B cell (primary cell): ENCODE measurements at regions of chr5 and their contacts with region 1.

Region 1: DNA sequence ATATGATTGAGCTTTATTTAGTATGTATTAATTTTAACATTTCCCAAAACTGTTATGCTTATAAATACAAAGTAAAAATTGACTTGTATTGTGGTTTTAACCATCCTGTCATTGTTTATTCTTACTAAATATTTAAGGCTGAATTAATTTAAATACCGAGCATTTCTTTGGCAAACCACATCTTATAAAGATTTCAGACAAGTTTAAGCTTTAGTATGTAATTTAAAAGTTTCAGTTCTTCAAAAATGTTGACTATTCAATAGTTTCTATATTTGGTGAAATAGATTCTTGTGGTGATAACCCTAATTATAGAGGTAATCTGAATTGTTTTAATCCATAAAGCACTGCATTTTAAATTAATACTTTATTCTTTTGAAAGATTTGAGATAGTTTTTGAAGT is 65.5 kb downstream of the CCNH start:
- DNase-seq: no peak
- ATAC-seq: no peak
- H3K4me3 ChIP-seq: no peak overlapping the region
- H3K4me3 Mint-ChIP-seq: no peak overlapping the region
- H3K27ac ChIP-seq: no peak overlapping the region
- H3K27ac Mint-ChIP-seq: no peak overlapping the region
- H3K4me1 ChIP-seq: peaks cover 0 to 9% of the 10 kb centered on the region in 2 donors
- H3K4me1 Mint-ChIP-seq: peaks cover 17% of the 10 kb centered on the region
- H3K27me3 ChIP-seq: no peaks in the 10 kb centered on the region
- H3K27me3 Mint-ChIP-seq: no peaks in the 10 kb centered on the region
- CTCF ChIP-seq: no peak

Region 2: GRCh38 chr5:87246061-87246460 is 101.2 kb before region 1 on chr5:
- CTCF ChIA-PET with region 1: no interaction called
- POLR2A ChIA-PET with region 1: no interaction called
- intact Hi-C with region 1: no loop called
- DNase-seq: no peak
- ATAC-seq: no peak
- H3K4me3 ChIP-seq: no peak overlapping the region
- H3K4me3 Mint-ChIP-seq: no peak overlapping the region
- H3K27ac ChIP-seq: no peak overlapping the region
- H3K27ac Mint-ChIP-seq: no peak overlapping the region
- H3K4me1 ChIP-seq: no peaks in the 10 kb centered on the region
- H3K4me1 Mint-ChIP-seq: peaks cover 3% of the 10 kb centered on the region
- H3K27me3 ChIP-seq: no peaks in the 10 kb centered on the region
- H3K27me3 Mint-ChIP-seq: no peaks in the 10 kb centered on the region
- CTCF ChIP-seq: no peak

Region 3: GRCh38 chr5:87393331-87393730 is 46.1 kb after region 1 on chr5:
- CTCF ChIA-PET with region 1: no interaction called
- POLR2A ChIA-PET with region 1: no interaction called
- intact Hi-C with region 1: loop called (anchors 5 kb)
- DNase-seq: no peak
- ATAC-seq: no peak
- H3K4me3 ChIP-seq: no peak overlapping the region
- H3K4me3 Mint-ChIP-seq: no peak overlapping the region
- H3K27ac ChIP-seq: no peak overlapping the region
- H3K27ac Mint-ChIP-seq: no peak overlapping the region
- H3K4me1 ChIP-seq: no peaks in the 10 kb centered on the region
- H3K4me1 Mint-ChIP-seq: no peaks in the 10 kb centered on the region
- H3K27me3 ChIP-seq: no peaks in the 10 kb centered on the region
- H3K27me3 Mint-ChIP-seq: no peaks in the 10 kb centered on the region
- CTCF ChIP-seq: no peak

Region 4: DNA sequence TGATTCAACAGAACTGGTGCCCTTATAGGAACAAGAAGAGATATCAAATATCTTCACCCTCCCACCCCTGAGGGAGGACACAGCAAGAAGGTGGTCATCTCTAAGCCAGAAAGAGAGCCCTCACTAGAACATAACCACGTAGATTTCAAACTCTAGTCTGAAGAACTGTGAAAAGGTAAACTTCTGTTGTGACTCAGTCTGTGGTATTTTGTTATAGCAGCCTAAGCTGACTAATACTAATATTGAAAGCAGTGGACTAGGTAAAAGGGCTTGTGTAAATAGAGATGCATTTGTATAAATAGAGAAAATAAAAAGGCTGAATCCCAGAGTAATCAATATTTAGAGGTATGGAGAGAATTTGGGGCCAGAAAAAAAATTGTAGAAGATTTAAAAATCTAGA is 223.1 kb after region 1 on chr5:
- CTCF ChIA-PET with region 1: no interaction called
- POLR2A ChIA-PET with region 1: no interaction called
- intact Hi-C with region 1: no loop called
- DNase-seq: no peak
- ATAC-seq: no peak
- H3K4me3 ChIP-seq: no peak overlapping the region
- H3K4me3 Mint-ChIP-seq: no peak overlapping the region
- H3K27ac ChIP-seq: no peak overlapping the region
- H3K27ac Mint-ChIP-seq: no peak overlapping the region
- H3K4me1 ChIP-seq: no peaks in the 10 kb centered on the region
- H3K4me1 Mint-ChIP-seq: no peaks in the 10 kb centered on the region
- H3K27me3 ChIP-seq: no peaks in the 10 kb centered on the region
- H3K27me3 Mint-ChIP-seq: no peaks in the 10 kb centered on the region
- CTCF ChIP-seq: no peak